Activated T-helper 2 cell treated with anti-CD3 and anti-CD28 coated beads, Interferon-gamma antibody, Interleukin-2, Interleukin-4, amounts not matched to agents 10 μg/mL and 5 μg/mL and 100 μg/mL, durations not matched to agents 14 hours and 24 hours and 36 hours (primary cell): ENCODE measurements at regions of chr3 and their contacts with region 1.

Region 1: GRCh38 chr3:14467814-14468620 is 65.6 kb downstream of the SLC6A6 start:
- DNase-seq: no peak
- H3K4me3 Mint-ChIP-seq: no peak overlapping the region
- H3K27ac Mint-ChIP-seq: no peak overlapping the region
- H3K4me1 Mint-ChIP-seq: peaks cover 10% of the 10 kb centered on the region
- H3K27me3 Mint-ChIP-seq: no peaks in the 10 kb centered on the region

Region 2: DNA sequence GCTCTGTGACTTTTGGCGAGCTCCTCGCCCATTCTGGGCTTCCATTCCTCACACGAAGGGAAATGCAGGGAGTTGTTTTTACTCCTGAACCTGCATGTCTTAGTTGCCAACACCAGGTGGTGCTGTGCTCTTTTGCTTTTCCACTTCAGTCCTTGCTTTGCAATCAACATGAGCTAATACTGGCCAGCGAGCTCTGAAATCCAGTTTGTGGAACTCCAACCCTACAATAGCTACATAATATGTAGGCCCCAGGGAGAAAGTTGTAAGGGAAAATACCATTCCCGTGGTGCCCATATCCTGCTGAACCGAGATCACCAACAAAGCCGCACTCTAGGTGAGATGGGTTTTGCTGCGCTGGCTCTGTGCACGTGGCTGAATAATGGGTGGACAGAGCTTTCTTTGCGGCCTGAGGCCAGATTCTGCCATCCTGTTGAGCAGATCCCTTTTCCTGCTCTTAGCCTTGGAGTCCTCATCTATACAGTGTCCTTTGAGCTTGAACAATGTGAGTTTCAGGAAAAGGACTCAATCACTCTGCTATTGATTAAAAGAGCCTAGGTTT is 264.4 kb before region 1 on chr3:
- intact Hi-C with region 1: loop called (anchors 5 kb)
- DNase-seq: peak; percentile 18
- H3K4me3 Mint-ChIP-seq: no peak overlapping the region
- H3K27ac Mint-ChIP-seq: no peak overlapping the region
- H3K4me1 Mint-ChIP-seq: no peaks in the 10 kb centered on the region
- H3K27me3 Mint-ChIP-seq: no peaks in the 10 kb centered on the region

Region 3: GRCh38 chr3:14402304-14402811 is 65.7 kb before region 1 on chr3 and contains the start of gene SLC6A6:
- intact Hi-C with region 1: loop called (anchors 1 kb)
- DNase-seq: peak; percentile 91
- H3K4me3 Mint-ChIP-seq: peak within 1 kb of the TSS; percentile 93
- H3K27ac Mint-ChIP-seq: peak within 1 kb of the TSS; percentile 95
- H3K4me1 Mint-ChIP-seq: peaks cover 35% of the 10 kb centered on the region
- H3K27me3 Mint-ChIP-seq: no peaks in the 10 kb centered on the region
- total RNA-seq, gene SLC6A6: 55.1 and 55.8 TPM in 2 replicates

Region 4: DNA sequence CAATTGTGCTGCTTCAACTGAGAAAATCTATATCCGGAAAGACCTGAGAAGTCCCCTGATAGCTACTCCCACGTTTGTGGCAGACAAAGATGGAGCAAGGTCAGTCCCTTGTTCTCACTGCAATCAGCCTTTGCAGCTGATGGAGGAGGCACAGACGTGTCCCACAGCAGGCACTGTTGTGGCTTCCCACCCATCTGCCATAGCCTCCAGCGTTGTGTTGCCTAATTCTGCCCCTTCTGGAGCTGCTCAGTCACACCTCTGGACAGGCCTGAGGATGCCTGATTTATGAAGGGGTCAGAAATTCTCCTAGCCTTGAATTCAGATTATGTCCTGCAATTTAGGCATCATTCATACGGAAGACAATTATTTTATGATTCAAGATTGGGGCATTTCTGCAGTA is 555.2 kb after region 1 on chr3:
- intact Hi-C with region 1: no loop called
- DNase-seq: no peak
- H3K4me3 Mint-ChIP-seq: no peak overlapping the region
- H3K27ac Mint-ChIP-seq: no peak overlapping the region
- H3K4me1 Mint-ChIP-seq: no peaks in the 10 kb centered on the region
- H3K27me3 Mint-ChIP-seq: no peaks in the 10 kb centered on the region